ENCODE measurements at regions of chr7 and their contacts with region 1.

Region 1: DNA sequence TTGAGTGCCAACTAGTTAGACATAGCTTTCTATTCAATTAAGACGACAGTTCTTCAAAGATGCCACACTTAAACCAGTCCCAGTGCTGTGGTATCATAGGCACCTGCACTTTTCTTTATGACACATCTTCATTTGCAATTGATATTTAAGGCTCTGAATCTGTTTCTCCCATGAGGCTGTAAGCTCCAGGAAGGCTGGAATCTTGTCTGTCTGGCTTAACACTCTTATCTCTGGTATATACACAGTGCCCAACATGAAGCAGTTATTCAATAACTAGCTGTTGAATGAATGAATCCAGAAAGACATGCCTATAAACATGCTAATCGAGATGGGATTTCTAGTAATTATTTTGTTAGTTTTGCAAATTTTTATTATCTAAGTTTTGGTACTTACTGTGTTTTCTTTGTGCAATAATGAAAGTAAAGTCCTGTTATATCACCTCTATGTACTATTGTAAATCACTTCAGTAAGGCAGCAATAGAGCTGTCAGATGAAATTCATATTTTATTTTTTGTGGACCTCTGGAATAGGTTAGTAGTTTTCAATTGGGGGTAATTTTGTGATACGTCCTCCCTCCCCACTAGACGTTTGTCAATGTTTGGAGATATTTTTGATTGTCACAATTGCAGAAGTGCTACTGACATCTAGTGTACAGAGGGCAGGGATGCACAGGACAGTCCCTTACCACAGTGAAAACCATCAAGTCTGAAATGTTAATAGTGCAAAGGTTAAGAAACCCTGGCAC is 51.3 kb upstream of the STEAP4 start:
- DNase-seq: peak; percentile 42
- H3K4me3 Mint-ChIP-seq: peak overlapping the region; percentile 52
- H3K27ac Mint-ChIP-seq: no peak overlapping the region
- H3K4me1 Mint-ChIP-seq: no peaks in the 10 kb centered on the region
- H3K27me3 Mint-ChIP-seq: no peaks in the 10 kb centered on the region
- CTCF ChIP-seq: peak; percentile 60

Region 2: DNA sequence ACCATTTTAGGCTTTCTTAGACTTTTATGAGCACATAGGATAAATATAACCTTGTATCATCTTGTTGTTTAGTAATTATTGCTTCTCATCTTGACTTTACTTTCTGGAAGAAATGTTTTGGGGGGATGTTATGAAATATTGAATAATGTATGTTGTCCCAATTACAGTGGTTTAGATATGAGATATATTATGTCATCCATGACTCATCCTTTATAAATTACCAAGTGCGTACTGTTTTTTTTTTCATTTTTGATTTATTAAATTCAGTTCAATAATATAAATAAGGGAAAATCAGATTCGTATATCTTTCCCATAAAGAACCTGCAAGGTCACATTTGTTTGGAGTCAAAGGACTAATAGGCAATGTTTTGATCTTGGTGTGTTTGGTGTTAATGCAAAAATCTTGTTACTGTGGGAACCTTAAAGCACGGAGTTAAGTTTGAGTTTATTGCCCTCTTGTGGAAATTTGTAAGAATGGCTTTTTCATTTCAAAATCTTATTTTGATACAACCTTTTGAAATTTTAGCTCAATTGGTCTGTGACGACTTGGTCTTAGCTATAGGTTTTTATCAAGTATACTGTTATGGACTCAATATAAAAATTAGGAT is 246.7 kb before region 1 on chr7:
- CTCF ChIA-PET with region 1: no interaction called
- POLR2A ChIA-PET with region 1: no interaction called
- intact Hi-C with region 1: loop called (anchors 2 kb)
- DNase-seq: peak; percentile 43
- H3K4me3 Mint-ChIP-seq: no peak overlapping the region
- H3K27ac Mint-ChIP-seq: no peak overlapping the region
- H3K4me1 Mint-ChIP-seq: no peaks in the 10 kb centered on the region
- H3K27me3 Mint-ChIP-seq: peaks cover 77% of the 10 kb centered on the region
- CTCF ChIP-seq: peak; percentile 51

Region 3: GRCh38 chr7:88176190-88176589 is 181.8 kb before region 1 on chr7:
- CTCF ChIA-PET with region 1: no interaction called
- POLR2A ChIA-PET with region 1: no interaction called
- intact Hi-C with region 1: no loop called
- DNase-seq: no peak
- H3K4me3 Mint-ChIP-seq: no peak overlapping the region
- H3K27ac Mint-ChIP-seq: no peak overlapping the region
- H3K4me1 Mint-ChIP-seq: no peaks in the 10 kb centered on the region
- H3K27me3 Mint-ChIP-seq: peaks cover 76% of the 10 kb centered on the region
- CTCF ChIP-seq: no peak

Region 4: DNA sequence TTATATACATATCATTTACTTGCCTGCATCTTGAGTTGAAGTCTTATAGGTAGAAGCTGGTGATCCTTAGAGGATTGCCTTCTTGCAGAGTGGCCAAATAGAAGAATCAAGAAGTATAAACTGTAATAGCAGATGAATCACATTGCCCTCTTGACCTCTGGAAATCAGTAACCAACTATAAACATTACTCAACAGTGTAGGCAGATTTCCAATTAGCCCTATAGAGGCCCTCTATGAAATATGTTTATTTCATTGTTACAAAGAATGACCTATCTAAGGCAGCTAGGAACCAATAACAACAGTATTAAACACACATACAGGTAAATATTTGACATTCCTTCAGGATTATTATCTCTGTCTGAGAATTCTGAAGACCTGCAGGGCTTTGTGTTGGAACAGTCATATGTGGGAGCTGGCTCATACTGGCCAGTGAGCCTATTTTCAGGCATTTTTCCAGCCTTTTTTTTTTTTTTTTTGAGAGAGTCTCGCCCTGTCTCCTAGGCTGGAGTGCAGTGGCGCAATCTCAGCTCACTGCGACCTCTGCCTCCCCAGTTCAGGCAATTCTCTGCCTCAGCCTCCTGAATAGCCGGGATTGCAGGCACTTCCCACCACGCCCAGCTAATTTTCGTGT is 131.0 kb before region 1 on chr7:
- CTCF ChIA-PET with region 1: interaction called, 10 read pairs
- POLR2A ChIA-PET with region 1: no interaction called
- intact Hi-C with region 1: no loop called
- DNase-seq: peak; percentile 92
- H3K4me3 Mint-ChIP-seq: no peak overlapping the region
- H3K27ac Mint-ChIP-seq: peak overlapping the region; percentile 76
- H3K4me1 Mint-ChIP-seq: no peaks in the 10 kb centered on the region
- H3K27me3 Mint-ChIP-seq: no peaks in the 10 kb centered on the region
- CTCF ChIP-seq: no peak

Region 5: DNA sequence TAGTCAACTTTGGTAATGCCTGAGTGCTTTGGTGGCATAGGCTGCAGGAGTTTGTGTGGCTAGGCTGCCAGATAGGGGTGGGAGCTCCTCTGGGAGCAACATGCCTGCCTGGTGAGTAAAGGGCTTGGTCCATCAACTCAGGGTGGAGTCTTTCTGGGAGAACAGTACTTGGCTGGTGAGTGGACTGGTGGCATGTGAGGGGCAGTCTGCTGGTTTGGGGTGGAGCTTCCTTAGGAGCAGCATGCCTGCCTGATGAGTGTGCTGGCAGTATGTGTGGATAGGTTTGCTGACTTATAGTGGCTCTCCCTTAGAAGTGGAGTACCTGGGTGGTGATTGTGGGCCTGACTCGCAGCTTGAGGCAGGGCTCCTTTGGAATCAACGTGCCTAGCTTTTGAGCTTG is 103.2 kb before region 1 on chr7:
- CTCF ChIA-PET with region 1: interaction called, 16 read pairs
- POLR2A ChIA-PET with region 1: no interaction called
- intact Hi-C with region 1: no loop called
- DNase-seq: peak; percentile 84
- H3K4me3 Mint-ChIP-seq: no peak overlapping the region
- H3K27ac Mint-ChIP-seq: peak overlapping the region; percentile 50
- H3K4me1 Mint-ChIP-seq: peaks cover 44% of the 10 kb centered on the region
- H3K27me3 Mint-ChIP-seq: no peaks in the 10 kb centered on the region
- CTCF ChIP-seq: no peak

Region 6: GRCh38 chr7:88306590-88307048 is 51.3 kb before region 1 on chr7 and contains the start of gene STEAP4:
- CTCF ChIA-PET with region 1: interaction called, 11 read pairs
- POLR2A ChIA-PET with region 1: no interaction called
- intact Hi-C with region 1: no loop called
- DNase-seq: peak; percentile 69
- H3K4me3 Mint-ChIP-seq: peak within 1 kb of the TSS; percentile 68
- H3K27ac Mint-ChIP-seq: peak within 1 kb of the TSS; percentile 3
- H3K4me1 Mint-ChIP-seq: peaks cover 1% of the 10 kb centered on the region
- H3K27me3 Mint-ChIP-seq: no peaks in the 10 kb centered on the region
- CTCF ChIP-seq: no peak
- total RNA-seq, gene STEAP4: not detected in 2 replicates

Region 7: DNA sequence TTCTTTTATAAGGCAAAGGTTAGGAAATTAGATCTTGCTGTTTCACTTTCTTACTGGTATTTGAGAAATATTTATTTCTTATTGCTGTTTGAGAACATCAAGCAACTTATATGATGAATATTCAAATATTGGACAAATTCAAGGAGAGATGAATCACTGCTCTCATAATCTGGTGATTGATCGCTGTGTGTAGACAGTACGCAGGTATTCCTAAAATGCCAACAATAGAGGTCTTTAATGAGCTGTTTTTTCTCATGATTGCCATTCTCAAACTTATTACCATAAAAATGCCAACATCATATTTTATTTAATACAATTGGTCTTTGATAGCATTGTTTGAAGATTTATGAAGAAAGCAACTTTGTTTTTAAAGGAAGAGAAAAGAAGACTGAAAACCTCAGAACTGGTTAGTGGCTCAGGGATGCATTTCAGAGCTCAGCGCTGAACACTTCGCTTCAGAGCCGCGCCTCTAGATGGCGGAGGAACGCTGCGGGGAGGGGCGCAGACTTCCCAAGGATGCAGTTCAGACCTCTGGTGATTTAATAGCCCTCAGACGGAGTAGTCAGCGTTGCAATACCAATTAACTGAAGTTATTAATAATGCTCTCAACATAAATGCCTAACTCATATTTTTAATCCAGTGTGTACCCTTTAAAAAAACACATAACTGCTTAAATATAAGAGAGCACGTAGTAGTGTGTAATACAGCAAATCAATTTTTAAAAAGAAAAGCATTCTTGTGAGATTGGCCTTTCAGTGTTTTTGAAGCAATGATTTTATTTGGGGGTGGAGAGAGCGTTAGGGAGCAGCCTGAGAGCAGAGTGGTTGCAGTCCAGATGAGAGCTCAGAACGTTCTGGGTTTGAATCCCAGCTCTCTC is 12.8 kb before region 1 on chr7:
- CTCF ChIA-PET with region 1: interaction called, 46 read pairs
- POLR2A ChIA-PET with region 1: no interaction called
- intact Hi-C with region 1: no loop called
- DNase-seq: peak; percentile 12
- H3K4me3 Mint-ChIP-seq: no peak overlapping the region
- H3K27ac Mint-ChIP-seq: no peak overlapping the region
- H3K4me1 Mint-ChIP-seq: no peaks in the 10 kb centered on the region
- H3K27me3 Mint-ChIP-seq: no peaks in the 10 kb centered on the region
- CTCF ChIP-seq: no peak

Region 8: DNA sequence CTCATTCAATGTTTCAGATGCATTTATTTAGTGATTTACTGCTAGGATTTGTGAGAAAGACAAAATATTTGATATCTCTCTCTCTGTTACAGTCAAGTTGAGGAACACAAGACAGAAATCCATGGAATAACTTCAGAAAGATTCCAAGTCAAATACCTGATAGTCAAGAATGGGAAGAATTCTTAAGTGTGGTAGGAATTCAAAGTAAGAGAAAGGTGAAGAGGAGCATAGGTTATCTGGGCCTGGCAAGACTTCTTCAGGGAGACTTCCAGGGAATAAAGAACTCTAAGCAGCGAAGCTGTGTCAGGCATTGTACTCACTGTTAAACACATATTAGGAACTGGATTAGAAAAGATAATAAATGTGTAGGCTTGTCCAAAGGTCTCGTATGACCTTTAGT is 28.2 kb after region 1 on chr7:
- CTCF ChIA-PET with region 1: no interaction called
- POLR2A ChIA-PET with region 1: no interaction called
- intact Hi-C with region 1: no loop called
- DNase-seq: no peak
- H3K4me3 Mint-ChIP-seq: no peak overlapping the region
- H3K27ac Mint-ChIP-seq: no peak overlapping the region
- H3K4me1 Mint-ChIP-seq: no peaks in the 10 kb centered on the region
- H3K27me3 Mint-ChIP-seq: peaks cover 41% of the 10 kb centered on the region
- CTCF ChIP-seq: no peak

Measured in MCF 10A (cell line).